Dorsolateral prefrontal cortex (tissue), 120 donors: ENCODE measurements at regions of chr9 and their contacts with region 1.

Region 1: GRCh38 chr9:137029058-137029936 is 1.3 kb upstream of the ABCA2 start:
- DNase-seq: peak; percentile 74 to 86 (median 82)
- H3K4me3 ChIP-seq: peak overlapping the region; percentile 54 to 92 (median 82)
- H3K27ac ChIP-seq: peak overlapping the region; percentile 86 to 100 (median 98)
- H3K27me3 ChIP-seq: no peaks in the 10 kb centered on the region
- CTCF ChIP-seq: peak; percentile 70 to 97 (median 85)

Region 2: DNA sequence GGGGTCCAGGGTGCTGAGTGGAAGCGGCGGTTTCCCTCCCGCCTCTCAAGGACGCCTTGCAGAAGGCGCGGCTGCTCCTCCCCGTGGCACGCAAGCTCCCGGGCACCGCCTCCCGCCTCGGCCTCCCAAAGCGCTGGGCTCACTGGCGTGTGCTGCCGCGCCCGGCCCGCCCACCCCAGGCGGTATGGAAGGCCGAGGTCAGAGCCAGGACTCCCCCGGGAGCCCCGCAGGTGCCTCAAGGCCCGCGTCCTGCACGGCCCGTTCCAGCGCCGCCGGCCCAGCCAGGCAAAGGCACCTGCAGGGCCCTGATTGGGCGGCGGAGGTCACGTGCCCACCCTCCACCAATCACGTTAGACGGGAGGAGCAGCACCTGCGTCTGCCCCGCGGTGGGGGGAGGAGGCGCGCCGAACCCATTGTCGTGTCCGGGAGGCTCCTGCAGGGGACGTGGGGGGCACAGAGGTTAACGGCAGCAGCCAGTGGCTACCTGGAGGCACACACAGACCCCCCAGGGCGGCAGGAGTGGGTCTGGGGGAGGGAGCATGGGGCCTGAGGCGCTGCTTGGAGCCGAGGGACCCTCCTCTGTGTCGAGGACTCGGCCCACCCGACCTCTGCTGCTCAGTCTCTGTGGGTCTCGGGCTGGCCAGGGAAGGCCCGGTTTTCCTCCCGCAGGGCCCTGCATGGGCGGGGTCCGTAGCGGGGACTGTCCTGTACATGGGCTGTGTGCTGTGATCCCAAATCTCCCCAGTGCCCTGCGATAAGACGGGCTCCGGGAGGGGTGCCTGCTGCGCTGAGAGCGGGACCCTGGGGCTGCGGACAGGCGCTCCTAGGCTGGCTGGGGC is 79.3 kb before region 1 on chr9:
- intact Hi-C with region 1: loop called (anchors 2 to 5 kb)
- DNase-seq: peak; percentile 96 to 100 (median 98)
- H3K4me3 ChIP-seq: peak overlapping the region; percentile 63 to 97 (median 81)
- H3K27ac ChIP-seq: peak overlapping the region; percentile 80 to 99 (median 96)
- H3K27me3 ChIP-seq: no peaks in the 10 kb centered on the region
- CTCF ChIP-seq: peak in 41 of 56 donors; percentile 4 to 59 (median 34)

Region 3: DNA sequence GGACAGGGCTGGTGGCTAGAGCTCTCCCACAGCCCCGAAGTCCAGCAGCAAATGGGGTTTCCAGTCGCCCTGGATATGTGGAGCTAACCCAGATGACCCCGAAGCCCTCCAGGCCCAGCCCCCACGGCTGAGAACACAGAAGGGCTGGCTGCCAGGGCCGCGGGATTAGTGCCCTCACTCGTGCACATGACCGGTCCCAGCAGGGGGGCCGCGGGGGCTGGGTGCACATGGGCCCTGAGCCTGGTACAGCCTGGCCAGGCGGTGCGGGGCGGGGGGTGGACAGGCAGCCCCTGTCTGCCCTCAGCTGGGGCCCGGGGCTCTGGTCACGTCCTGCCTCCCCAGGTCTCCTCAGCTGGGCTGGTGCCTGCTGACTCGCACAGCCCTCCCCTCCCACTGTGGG is 165.1 kb after region 1 on chr9:
- intact Hi-C with region 1: loop called in 1 of 2 experiments (anchors 5 kb)
- DNase-seq: peak; percentile 66 to 97 (median 94)
- H3K4me3 ChIP-seq: peak overlapping the region in 58 of 59 donors; percentile 5 to 85 (median 54)
- H3K27ac ChIP-seq: peak overlapping the region; percentile 90 to 100 (median 99)
- H3K27me3 ChIP-seq: no peaks in the 10 kb centered on the region
- CTCF ChIP-seq: peak in 3 of 56 donors; percentile 8 to 28 (median 16)